OCI-LY7 (cell line): ENCODE measurements at regions of chr1 and their contacts with region 1.

Region 1: GRCh38 chr1:153946622-153947241 is at the start of gene DENND4B:
- DNase-seq: peak; percentile 90
- H3K4me3 ChIP-seq: peak within 1 kb of the TSS; percentile 86
- H3K27ac ChIP-seq: peak within 1 kb of the TSS; percentile 92
- H3K4me1 ChIP-seq: peaks cover 35% of the 10 kb centered on the region
- CTCF ChIP-seq: peak; percentile 87
- total RNA-seq, gene DENND4B: 41.8 and 50.5 TPM in 2 replicates

Region 2: DNA sequence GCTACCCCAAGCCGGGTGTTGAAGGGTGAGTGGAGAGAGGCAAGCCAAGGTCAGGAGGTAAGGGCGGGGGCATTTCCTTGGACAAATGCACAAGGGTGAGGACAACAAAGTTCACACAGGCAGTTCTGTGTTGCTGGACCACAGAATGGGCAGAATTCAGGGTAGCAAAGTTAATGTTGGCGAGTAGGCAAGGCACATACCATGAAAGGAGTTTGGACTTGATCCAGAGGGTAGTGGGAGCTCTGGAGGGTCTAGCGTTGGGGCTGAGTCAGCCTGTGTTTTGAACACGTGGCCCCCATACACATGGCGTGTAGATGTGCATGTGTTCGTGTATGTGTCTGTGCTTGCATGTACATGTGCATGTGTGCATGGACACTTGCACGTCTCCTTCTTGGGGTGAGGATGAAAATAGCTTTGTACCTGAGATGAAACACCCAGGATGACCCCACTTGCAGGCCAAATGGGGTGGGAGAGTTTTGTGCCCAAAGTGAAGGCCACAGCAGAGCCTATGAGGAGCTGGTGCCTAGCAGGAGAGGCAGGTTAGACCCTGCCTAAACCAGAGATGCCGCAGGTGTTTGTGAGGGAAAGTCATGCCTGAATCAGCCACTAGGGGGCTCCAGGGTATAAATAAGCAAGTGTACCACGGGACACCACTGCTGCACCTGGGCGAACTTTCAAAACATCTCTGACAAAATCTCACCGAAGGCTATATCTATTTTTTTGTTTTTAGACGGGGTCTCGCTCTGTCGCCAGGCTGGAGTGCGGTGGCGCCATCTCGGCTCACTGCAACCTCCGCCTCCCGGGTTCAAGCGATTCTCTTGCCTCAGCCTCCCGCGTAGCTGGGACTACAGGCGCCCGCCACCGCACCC is 149.7 kb before region 1 on chr1:
- CTCF ChIA-PET with region 1: no interaction called
- POLR2A ChIA-PET with region 1: no interaction called
- intact Hi-C with region 1: loop called (anchors 1 kb)
- DNase-seq: peak; percentile 88
- H3K4me3 ChIP-seq: no peak overlapping the region
- H3K27ac ChIP-seq: no peak overlapping the region
- H3K4me1 ChIP-seq: peaks cover 5% of the 10 kb centered on the region
- CTCF ChIP-seq: peak; percentile 83

Region 3: GRCh38 chr1:153816283-153816889 is 130.3 kb before region 1 on chr1:
- CTCF ChIA-PET with region 1: no interaction called
- POLR2A ChIA-PET with region 1: no interaction called
- intact Hi-C with region 1: loop called (anchors 1 kb)
- DNase-seq: no peak
- H3K4me3 ChIP-seq: no peak overlapping the region
- H3K27ac ChIP-seq: no peak overlapping the region
- H3K4me1 ChIP-seq: peaks cover 3% of the 10 kb centered on the region
- CTCF ChIP-seq: no peak

Region 4: GRCh38 chr1:153928791-153929341 is 17.9 kb before region 1 on chr1:
- CTCF ChIA-PET with region 1: no interaction called
- POLR2A ChIA-PET with region 1: interaction called, 32 read pairs
- intact Hi-C with region 1: no loop called
- DNase-seq: no peak
- H3K4me3 ChIP-seq: no peak overlapping the region
- H3K27ac ChIP-seq: no peak overlapping the region
- H3K4me1 ChIP-seq: peaks cover 6% of the 10 kb centered on the region
- CTCF ChIP-seq: no peak

Region 5: GRCh38 chr1:153958111-153958960 is 11.6 kb after region 1 on chr1 and contains the start of gene CRTC2:
- CTCF ChIA-PET with region 1: interaction called, 4 read pairs
- POLR2A ChIA-PET with region 1: interaction called, 9 read pairs
- intact Hi-C with region 1: loop called (anchors 1 kb)
- DNase-seq: peak; percentile 98
- H3K4me3 ChIP-seq: peak within 1 kb of the TSS; percentile 87
- H3K27ac ChIP-seq: peak within 1 kb of the TSS; percentile 74
- H3K4me1 ChIP-seq: peaks cover 43% of the 10 kb centered on the region
- CTCF ChIP-seq: peak; percentile 37; the same call in 1 of the 2 replicates
- total RNA-seq, gene CRTC2: 15.6 and 29.1 TPM in 2 replicates

Region 6: GRCh38 chr1:153967082-153968000 is 20.6 kb after region 1 on chr1 and contains the start of gene CREB3L4:
- CTCF ChIA-PET with region 1: interaction called, 6 read pairs
- POLR2A ChIA-PET with region 1: interaction called, 19 read pairs
- intact Hi-C with region 1: no loop called
- DNase-seq: peak; percentile 98
- H3K4me3 ChIP-seq: peak within 1 kb of the TSS; percentile 78
- H3K27ac ChIP-seq: peak within 1 kb of the TSS; percentile 89
- H3K4me1 ChIP-seq: peaks cover 40% of the 10 kb centered on the region
- CTCF ChIP-seq: peak; percentile 67
- total RNA-seq, gene CREB3L4: 17.0 and 17.4 TPM in 2 replicates

Region 7: GRCh38 chr1:153990468-153991150 is 43.9 kb after region 1 on chr1 and contains the start of gene RPS27:
- CTCF ChIA-PET with region 1: no interaction called
- POLR2A ChIA-PET with region 1: interaction called, 3 read pairs
- intact Hi-C with region 1: loop called (anchors 2 kb)
- DNase-seq: peak; percentile 99
- H3K4me3 ChIP-seq: peak within 1 kb of the TSS; percentile 81
- H3K27ac ChIP-seq: peak within 1 kb of the TSS; percentile 62
- H3K4me1 ChIP-seq: peaks cover 50% of the 10 kb centered on the region
- CTCF ChIP-seq: no peak
- total RNA-seq, gene RPS27: 4,465 and 5,738 TPM in 2 replicates